ENCODE measurements at regions of chr6 and their contacts with region 1.

Region 1: DNA sequence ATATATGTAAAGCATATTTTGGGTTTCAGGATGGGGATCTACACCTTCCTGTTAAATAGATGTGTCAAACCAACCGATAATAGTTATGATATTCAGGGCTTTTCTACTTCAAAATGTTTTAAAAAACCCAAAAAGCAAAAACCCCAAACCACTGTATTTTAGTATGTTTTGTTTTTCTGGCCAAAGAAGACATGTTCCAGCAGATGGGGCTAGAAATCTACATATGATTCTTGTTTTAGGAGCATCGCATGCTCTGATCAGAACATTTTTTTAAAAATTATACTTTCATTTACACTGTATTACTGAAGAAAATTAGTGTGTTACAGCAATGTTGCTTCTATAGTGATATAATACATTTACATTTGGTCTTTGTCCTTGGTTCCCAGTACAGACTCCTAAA is 11.0 kb downstream of the RMND1 start:
- DNase-seq: no peak
- H3K4me3 ChIP-seq: no peak overlapping the region
- H3K27ac ChIP-seq: no peak overlapping the region
- H3K4me1 ChIP-seq: no peaks in the 10 kb centered on the region
- H3K27me3 ChIP-seq: no peaks in the 10 kb centered on the region
- CTCF ChIP-seq: peak in 2 of 4 experiments; percentile 32 to 37
- POLR2A ChIP-seq: no peak

Region 2: DNA sequence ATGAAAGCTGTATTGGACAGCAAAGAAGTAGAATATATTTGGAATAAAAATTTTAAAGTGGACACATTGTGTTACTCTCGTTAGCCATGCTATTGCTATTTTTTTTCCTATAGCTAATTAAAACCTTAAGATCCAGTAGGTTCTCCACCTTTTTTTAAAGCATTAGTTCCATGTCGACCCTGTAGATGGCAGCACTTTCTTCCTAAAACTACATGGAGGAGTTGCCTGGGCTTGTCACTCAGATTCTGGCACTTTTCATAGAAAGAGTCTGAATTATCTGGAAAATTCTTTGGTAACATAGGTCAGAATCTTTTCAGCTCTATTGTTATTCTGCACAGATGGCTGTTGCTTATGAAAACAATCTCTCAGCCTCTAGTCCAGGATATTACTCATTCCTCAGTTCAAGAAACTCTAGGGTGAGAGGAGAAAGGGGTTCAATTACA is 324.5 kb after region 1 on chr6:
- intact Hi-C with region 1: loop called (anchors 10 kb)
- DNase-seq: peak; percentile 50
- H3K4me3 ChIP-seq: no peak overlapping the region
- H3K27ac ChIP-seq: no peak overlapping the region
- H3K4me1 ChIP-seq: no peaks in the 10 kb centered on the region
- H3K27me3 ChIP-seq: no peaks in the 10 kb centered on the region
- CTCF ChIP-seq: peak; percentile 38 to 77 (median 70)
- POLR2A ChIP-seq: no peak

Region 3: GRCh38 chr6:152124429-152125074 is 683.6 kb after region 1 on chr6:
- intact Hi-C with region 1: loop called (anchors 5 kb)
- DNase-seq: peak; percentile 24
- H3K4me3 ChIP-seq: no peak overlapping the region
- H3K27ac ChIP-seq: no peak overlapping the region
- H3K4me1 ChIP-seq: no peaks in the 10 kb centered on the region
- H3K27me3 ChIP-seq: no peaks in the 10 kb centered on the region
- CTCF ChIP-seq: peak; percentile 23 to 92 (median 76)
- POLR2A ChIP-seq: no peak

Region 4: GRCh38 chr6:152184917-152185574 is 744.1 kb after region 1 on chr6:
- intact Hi-C with region 1: no loop called
- DNase-seq: no peak
- H3K4me3 ChIP-seq: no peak overlapping the region
- H3K27ac ChIP-seq: no peak overlapping the region
- H3K4me1 ChIP-seq: no peaks in the 10 kb centered on the region
- H3K27me3 ChIP-seq: no peaks in the 10 kb centered on the region
- CTCF ChIP-seq: no peak
- POLR2A ChIP-seq: no peak